ENCODE measurements at regions of chr1 and their contacts with region 1.

Region 1: GRCh38 chr1:177274687-177275211 is 104.0 kb downstream of the BRINP2 start:
- DNase-seq: no peak

Region 2: DNA sequence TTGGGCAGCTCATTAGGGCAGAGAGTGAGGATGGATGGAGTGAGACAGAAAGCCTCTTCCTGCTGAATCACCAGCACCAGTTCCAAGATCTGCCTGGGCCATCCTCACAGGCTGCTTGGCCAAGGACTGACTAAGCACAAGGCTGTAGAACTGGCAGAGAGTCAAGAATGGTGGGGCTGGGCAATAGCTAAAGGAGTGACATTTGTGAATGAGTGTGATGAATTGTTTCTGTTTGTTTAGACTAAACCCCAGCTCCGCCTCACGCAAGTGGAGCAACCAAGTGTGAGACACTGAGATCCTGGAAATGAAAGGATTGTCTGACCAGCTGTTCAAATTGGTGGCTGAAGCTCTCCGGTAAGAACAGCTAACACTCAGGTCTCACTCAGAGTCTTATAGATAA is 65.4 kb before region 1 on chr1:
- intact Hi-C with region 1: no loop called
- DNase-seq: peak; percentile 78

Region 3: DNA sequence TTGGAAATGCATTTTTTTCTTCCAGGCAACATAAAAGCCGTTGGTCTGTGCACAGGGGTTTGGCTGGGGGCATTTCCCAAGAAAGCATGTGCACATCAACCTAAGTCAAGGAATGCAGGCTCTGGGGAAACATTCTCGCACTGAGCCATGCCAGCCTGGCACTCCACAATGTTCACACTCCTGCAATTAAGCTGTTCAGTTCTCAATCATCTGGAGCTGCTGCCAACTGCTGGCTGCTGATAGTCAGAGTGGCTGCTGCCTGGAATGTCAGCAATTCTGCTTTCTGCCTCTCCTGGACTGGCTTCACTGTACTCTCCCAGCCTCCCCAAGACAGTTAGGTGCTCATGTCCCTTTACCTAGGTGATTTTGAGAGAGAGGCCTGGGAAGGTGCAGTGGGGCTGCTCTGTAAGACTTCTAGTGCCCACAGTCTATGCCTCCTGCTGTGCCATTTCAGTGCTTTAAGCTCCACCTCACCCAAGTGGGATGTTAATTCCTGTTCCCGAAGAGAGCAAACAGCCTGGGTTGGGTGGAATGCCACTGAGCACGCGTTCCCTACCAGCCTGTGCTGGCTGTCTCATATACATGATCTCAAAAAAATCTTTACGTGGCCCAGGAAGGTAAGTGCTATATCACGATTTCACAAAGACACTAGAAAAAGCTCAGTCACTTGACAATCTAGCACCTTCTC is 27.8 kb after region 1 on chr1:
- intact Hi-C with region 1: loop called (anchors 2 kb)
- DNase-seq: no peak

Region 4: DNA sequence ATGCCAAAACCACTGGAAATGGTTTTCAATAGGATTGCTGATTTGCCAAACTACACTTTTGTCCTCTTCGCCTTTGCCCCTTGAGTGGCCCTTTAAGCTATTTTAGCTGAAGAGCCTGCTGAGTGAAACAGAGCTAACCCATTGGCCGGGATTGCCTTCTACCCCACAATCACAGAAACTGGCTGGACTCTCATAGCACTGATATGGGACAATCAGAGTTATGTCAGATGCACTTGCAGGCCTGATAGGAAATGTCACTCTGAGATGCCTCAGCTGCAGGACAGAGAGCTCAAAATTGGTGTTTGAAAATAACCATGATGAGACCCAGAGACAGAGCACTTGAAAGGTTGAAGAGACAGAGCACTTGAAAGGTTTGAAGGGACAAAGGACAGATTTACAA is 250.4 kb after region 1 on chr1:
- intact Hi-C with region 1: loop called (anchors 10 kb)
- DNase-seq: no peak